Caco-2 (cell line): ENCODE measurements at regions of chr10 and their contacts with region 1.

Region 1: GRCh38 chr10:121553511-121554264 is 44.6 kb downstream of the FGFR2 start:
- DNase-seq: peak; percentile 56 to 63
- H3K4me3 ChIP-seq: no peak overlapping the region
- H3K4me3 Mint-ChIP-seq: no peak overlapping the region
- H3K27ac Mint-ChIP-seq: peak overlapping the region; percentile 68
- H3K4me1 ChIP-seq: peaks cover 53% of the 10 kb centered on the region
- H3K4me1 Mint-ChIP-seq: peaks cover 55% of the 10 kb centered on the region
- H3K27me3 ChIP-seq: no peaks in the 10 kb centered on the region
- H3K27me3 Mint-ChIP-seq: no peaks in the 10 kb centered on the region
- CTCF ChIP-seq: no peak

Region 2: GRCh38 chr10:121216721-121217181 is 336.9 kb before region 1 on chr10:
- CTCF ChIA-PET with region 1: no interaction called
- POLR2A ChIA-PET with region 1: no interaction called
- intact Hi-C with region 1: no loop called
- DNase-seq: no peak
- H3K4me3 ChIP-seq: no peak overlapping the region
- H3K4me3 Mint-ChIP-seq: no peak overlapping the region
- H3K27ac Mint-ChIP-seq: no peak overlapping the region
- H3K4me1 ChIP-seq: no peaks in the 10 kb centered on the region
- H3K4me1 Mint-ChIP-seq: peaks cover 6% of the 10 kb centered on the region
- H3K27me3 ChIP-seq: no peaks in the 10 kb centered on the region
- H3K27me3 Mint-ChIP-seq: no peaks in the 10 kb centered on the region
- CTCF ChIP-seq: no peak

Region 3: GRCh38 chr10:121288011-121288410 is 265.7 kb before region 1 on chr10:
- CTCF ChIA-PET with region 1: no interaction called
- POLR2A ChIA-PET with region 1: no interaction called
- intact Hi-C with region 1: no loop called
- DNase-seq: no peak
- H3K4me3 ChIP-seq: no peak overlapping the region
- H3K4me3 Mint-ChIP-seq: no peak overlapping the region
- H3K27ac Mint-ChIP-seq: no peak overlapping the region
- H3K4me1 ChIP-seq: no peaks in the 10 kb centered on the region
- H3K4me1 Mint-ChIP-seq: peaks cover 13% of the 10 kb centered on the region
- H3K27me3 ChIP-seq: no peaks in the 10 kb centered on the region
- H3K27me3 Mint-ChIP-seq: no peaks in the 10 kb centered on the region
- CTCF ChIP-seq: no peak

Region 4: DNA sequence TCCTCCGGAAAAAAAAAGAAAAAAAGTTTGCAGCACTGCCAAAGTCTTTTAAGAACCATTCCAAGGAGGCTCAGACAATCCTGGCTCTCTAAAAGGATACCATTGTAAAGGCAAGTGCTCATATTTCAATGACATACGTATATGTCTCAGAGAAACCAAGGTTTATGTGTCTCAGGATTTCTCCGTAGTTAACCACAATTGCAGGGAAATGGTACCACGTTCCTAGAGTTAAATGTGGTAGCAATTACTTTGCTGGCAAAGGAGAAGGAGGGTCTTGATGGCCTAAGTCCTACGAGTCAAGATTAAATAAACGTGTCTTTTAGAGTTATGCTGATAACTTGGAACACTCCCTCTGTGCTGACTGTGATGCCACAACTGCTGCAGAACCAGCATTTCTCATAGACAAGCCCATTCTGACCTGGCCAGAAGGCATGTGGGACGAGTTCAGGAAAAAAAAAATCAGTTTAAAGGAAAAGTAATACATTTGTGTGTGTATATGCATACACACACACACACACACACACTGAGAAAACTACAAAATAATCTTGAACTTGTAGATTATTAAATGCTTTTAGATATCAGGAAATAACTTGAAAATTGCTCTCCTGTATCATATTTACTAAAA is 201.3 kb before region 1 on chr10:
- CTCF ChIA-PET with region 1: no interaction called
- POLR2A ChIA-PET with region 1: no interaction called
- intact Hi-C with region 1: no loop called
- DNase-seq: no peak
- H3K4me3 ChIP-seq: no peak overlapping the region
- H3K4me3 Mint-ChIP-seq: no peak overlapping the region
- H3K27ac Mint-ChIP-seq: no peak overlapping the region
- H3K4me1 ChIP-seq: no peaks in the 10 kb centered on the region
- H3K4me1 Mint-ChIP-seq: no peaks in the 10 kb centered on the region
- H3K27me3 ChIP-seq: no peaks in the 10 kb centered on the region
- H3K27me3 Mint-ChIP-seq: no peaks in the 10 kb centered on the region
- CTCF ChIP-seq: no peak

Region 5: DNA sequence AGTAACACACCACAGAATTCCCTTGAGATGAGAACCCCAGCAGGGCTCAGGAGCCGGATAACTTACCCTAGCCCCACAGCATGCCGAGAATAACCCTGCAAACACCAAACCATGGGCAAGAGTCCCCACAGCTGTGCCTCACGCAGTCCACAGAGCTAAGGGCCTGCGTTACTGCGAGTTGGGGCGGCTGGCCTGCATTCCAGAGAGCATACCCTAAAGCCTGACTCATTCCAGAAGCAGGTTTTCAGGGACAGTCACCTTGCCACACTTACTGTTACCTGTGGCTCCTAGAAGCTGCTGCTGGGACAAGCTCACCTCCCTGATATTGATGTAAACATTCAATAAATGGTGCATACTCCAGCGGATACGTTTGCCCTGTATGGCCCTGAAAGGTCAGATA is 26.0 kb after region 1 on chr10:
- CTCF ChIA-PET with region 1: no interaction called
- POLR2A ChIA-PET with region 1: no interaction called
- intact Hi-C with region 1: loop called (anchors 2 kb)
- DNase-seq: peak; percentile 67 to 68
- H3K4me3 ChIP-seq: no peak overlapping the region
- H3K4me3 Mint-ChIP-seq: peak overlapping the region; percentile 48
- H3K27ac Mint-ChIP-seq: peak overlapping the region; percentile 92
- H3K4me1 ChIP-seq: peaks cover 58% of the 10 kb centered on the region
- H3K4me1 Mint-ChIP-seq: peaks cover 45% of the 10 kb centered on the region
- H3K27me3 ChIP-seq: no peaks in the 10 kb centered on the region
- H3K27me3 Mint-ChIP-seq: no peaks in the 10 kb centered on the region
- CTCF ChIP-seq: no peak